Spleen (tissue), 13 donors: ENCODE measurements at regions of chr3 and their contacts with region 1.

Region 1: DNA sequence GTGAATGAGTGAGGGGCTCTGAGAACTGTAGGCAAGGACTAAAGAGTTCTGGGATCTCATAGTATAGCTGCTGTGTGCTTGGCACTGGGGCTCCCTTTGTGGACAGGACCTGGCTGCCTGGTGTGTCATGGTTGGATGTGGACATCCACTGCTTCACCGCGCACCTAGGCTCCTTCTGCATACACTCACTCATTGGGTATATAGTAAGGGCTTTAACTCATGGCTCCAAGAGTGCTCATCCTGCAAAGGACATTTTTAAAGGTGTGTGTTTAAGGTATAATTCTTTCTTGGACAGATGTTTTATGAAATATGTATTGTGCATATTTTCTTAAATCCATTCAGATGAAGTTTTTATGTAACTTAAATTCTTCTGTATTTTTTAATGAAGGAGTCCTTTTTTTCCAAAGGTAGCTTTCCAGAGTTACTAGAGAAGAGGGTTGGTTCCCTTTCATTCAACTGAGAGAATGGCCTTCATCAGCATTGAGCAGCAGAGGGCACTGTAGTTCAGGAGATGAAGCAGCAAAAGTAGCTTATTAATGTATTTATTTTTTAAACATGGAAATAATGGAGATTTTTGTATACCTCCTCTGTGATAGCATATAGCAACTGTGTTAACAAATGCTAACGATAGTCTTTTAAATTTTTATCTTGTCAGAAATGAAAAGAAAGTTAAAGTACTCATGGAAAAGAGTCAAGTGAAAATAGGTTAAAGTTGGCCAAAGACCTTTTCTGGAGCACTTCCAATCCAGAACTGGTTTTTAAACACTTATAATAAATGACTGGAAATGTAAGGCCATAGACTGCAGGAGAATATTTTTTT is 25.2 kb downstream of the OXNAD1 start:
- DNase-seq: no peak
- H3K4me3 ChIP-seq: peak overlapping the region in 2 of 8 donors; percentile 34 to 63
- H3K27ac ChIP-seq: peak overlapping the region in 7 of 8 donors; percentile 11 to 89 (median 35)
- H3K4me1 ChIP-seq: peaks cover 18 to 83% (median 38%) of the 10 kb centered on the region in 6 donors
- H3K27me3 ChIP-seq: no peaks in the 10 kb centered on the region
- CTCF ChIP-seq: peak; percentile 73 to 85 (median 80)
- POLR2A ChIP-seq: no peak

Region 2: GRCh38 chr3:16085884-16086608 is 204.2 kb before region 1 on chr3:
- intact Hi-C with region 1: no loop called
- DNase-seq: no peak
- H3K4me3 ChIP-seq: no peak overlapping the region
- H3K27ac ChIP-seq: no peak overlapping the region
- H3K4me1 ChIP-seq: no peaks in the 10 kb centered on the region
- H3K27me3 ChIP-seq: peaks cover 0 to 6% (median 0%) of the 10 kb centered on the region in 7 donors
- CTCF ChIP-seq: no peak
- POLR2A ChIP-seq: no peak

Region 3: DNA sequence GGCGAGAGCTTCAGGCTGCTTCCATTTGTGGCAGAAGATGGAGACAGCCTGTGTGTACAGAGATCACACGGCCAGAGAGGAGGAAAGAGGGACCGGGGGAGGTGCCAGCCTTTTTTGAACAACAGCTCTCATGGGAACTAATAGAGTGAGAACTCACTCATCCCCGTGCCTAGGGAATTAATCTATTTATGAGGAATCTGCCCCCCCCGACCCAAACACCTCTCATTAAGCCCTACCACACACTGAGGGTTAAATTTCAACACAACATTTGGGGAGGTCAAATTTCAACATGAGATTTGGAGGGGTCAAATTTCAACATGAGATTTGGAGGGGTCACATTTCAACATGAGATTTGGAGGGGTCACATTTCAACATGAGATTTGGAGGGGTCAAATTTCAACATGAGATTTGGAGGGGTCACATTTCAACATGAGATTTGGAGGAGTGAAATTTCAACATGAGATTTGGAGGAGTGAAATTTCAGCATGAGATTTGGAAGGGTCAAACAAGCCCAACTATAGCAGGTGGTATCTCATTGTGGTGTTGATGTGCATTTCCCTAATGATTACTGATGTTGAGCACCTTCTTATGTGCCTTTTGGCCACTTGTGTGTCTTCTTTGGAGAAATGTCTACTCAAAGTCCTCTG is 243.8 kb after region 1 on chr3:
- intact Hi-C with region 1: no loop called
- DNase-seq: no peak
- H3K4me3 ChIP-seq: no peak overlapping the region
- H3K27ac ChIP-seq: no peak overlapping the region
- H3K4me1 ChIP-seq: peaks cover 0 to 6% (median 0%) of the 10 kb centered on the region in 6 donors
- H3K27me3 ChIP-seq: peaks cover 0 to 6% (median 0%) of the 10 kb centered on the region in 7 donors
- CTCF ChIP-seq: no peak
- POLR2A ChIP-seq: no peak

Region 4: DNA sequence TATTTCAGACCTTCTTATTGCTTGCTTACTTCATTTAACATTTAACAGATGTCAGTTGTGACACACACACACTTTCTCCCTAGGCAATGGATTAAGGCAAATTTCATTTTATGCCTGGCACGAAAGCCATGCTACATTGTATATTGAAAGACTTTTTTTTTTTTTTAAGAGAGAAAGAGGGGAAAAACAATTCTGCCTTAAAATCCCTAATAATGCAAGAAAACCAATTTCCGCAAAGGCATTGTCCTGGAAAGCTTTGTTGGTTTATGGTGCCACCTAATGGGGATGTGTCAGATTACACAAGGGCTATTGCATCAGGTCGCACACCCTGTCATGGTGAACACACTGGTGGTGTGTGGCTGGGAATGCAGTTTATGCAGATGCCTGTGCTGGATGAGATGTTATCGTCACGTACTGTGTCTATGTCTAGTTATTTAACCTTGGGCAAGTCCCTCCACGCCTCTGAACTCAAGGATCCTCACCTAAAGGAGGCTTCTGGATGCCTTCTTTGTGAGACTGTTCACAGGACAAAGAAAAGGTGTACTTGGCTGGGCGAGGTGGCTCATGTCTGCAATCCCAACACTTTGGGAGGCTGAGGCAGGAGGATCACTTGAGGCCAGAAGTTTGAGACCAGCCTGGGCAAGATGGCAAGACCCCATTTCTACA is 260.6 kb after region 1 on chr3:
- intact Hi-C with region 1: loop called (anchors 2 kb)
- DNase-seq: no peak
- H3K4me3 ChIP-seq: peak overlapping the region in 2 of 8 donors; percentile 8 to 15
- H3K27ac ChIP-seq: no peak overlapping the region
- H3K4me1 ChIP-seq: peaks cover 0 to 23% (median 7%) of the 10 kb centered on the region in 6 donors
- H3K27me3 ChIP-seq: no peaks in the 10 kb centered on the region
- CTCF ChIP-seq: peak; percentile 76 to 96 (median 91)
- POLR2A ChIP-seq: no peak